K562 (cell line): ENCODE measurements at regions of chr15 and their contacts with region 1.

Region 1: GRCh38 chr15:66951531-66952320 is 113.7 kb upstream of the SMAD3 start:
- DNase-seq: no peak
- ATAC-seq: no peak
- H3K4me3 ChIP-seq: no peak overlapping the region
- H3K27ac ChIP-seq: no peak overlapping the region
- H3K4me1 ChIP-seq: 0 out of 5 replicates have a peak, but pooled peaks cover 0 to 5% of the 10 kb centered on the region in 2 experiments
- H3K27me3 ChIP-seq: 0 out of 5 replicates have a peak, but pooled peaks cover 0 to 6% of the 10 kb centered on the region in 2 experiments
- CTCF ChIP-seq: no peak
- EP300 ChIP-seq: no peak
- POLR2A ChIP-seq: no peak
- RAD21 ChIP-seq: no peak

Region 2: DNA sequence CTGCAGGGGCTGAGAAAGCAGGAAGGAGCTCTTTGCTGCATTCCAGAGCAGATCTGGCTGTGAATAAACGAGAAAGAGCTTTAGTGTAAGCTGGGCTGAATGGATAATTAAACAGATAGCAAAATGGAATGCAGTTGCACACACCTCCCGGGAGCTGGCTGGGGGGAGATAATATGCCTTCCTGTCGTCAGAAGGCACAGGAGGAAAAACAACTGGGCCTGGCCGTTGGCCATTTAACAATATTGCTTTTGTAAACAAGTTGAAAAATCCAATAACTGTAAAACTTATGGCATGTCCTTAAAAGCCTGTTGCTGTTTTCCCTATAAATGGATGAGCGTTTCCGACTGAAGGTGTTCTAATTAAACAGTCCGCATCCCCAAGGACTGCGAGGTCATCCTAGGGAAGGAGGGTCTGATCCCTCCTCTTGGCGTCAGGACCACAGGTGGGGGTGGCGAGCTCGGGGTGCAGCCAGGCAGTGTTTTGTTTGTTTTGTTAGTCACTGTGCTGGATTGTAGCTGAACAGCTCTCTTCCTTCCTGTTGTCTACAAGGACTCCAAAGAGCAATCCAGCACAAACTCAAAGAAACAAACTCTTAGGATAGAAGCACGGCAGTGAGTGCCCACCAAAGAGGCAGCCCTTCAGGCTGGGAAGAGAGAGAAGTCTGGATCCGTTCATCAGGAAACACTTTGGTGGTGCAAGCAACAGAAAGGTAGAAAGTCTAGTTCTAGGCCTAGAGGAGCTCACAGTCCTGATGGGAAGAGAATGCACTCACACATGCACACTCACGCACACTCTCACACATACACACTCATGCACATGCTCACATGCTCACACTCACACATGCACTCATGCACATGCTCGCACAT is 19.7 kb before region 1 on chr15:
- CTCF ChIA-PET with region 1: no interaction called
- POLR2A ChIA-PET with region 1: no interaction called
- in situ Hi-C with region 1: no loop called
- intact Hi-C with region 1: no loop called
- DNase-seq: peak in 2 of 4 experiments; percentile 57 to 59
- ATAC-seq: peak; percentile 81
- H3K4me3 ChIP-seq: no peak overlapping the region
- H3K27ac ChIP-seq: peak overlapping the region; percentile 69
- H3K4me1 ChIP-seq: peaks cover 30% of the 10 kb centered on the region in 2 experiments
- H3K27me3 ChIP-seq: no peaks in the 10 kb centered on the region
- CTCF ChIP-seq: no peak
- EP300 ChIP-seq: peak; percentile 65; the same call in 1 of the 2 replicates
- POLR2A ChIP-seq: no peak
- RAD21 ChIP-seq: no peak

Region 3: DNA sequence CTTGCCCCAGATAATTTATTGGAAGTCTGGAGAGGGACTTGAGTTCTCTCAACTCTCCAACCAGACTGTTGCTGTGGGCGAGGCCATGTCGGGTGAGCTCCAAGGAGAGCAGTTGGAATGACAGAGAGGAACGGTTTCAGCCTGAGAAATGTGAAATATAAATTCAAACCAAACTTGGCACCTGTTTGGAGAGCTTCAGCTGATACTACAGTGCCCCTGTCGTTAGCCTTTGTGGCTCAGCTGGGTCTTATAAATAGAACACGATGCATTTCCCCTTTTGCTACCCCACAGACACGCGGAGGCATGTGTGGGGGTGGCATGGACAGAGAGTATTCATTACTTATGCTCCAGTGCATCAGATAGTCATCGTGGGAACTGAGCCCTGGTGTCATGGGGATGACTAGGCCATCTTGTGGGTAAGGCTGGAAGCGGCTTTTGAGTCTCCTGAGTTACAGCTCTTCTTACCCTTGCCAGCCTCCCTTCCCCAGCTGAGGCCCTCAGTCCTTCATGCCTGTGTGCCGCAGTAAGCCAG is 129.2 kb after region 1 on chr15:
- CTCF ChIA-PET with region 1: no interaction called
- POLR2A ChIA-PET with region 1: no interaction called
- in situ Hi-C with region 1: no loop called
- intact Hi-C with region 1: loop called (anchors 5 kb)
- DNase-seq: peak in 3 of 4 experiments; percentile 46 to 78 (median 77)
- ATAC-seq: peak; percentile 54
- H3K4me3 ChIP-seq: no peak overlapping the region
- H3K27ac ChIP-seq: peak overlapping the region; percentile 69
- H3K4me1 ChIP-seq: peaks cover 14 to 69% of the 10 kb centered on the region in 2 experiments
- H3K27me3 ChIP-seq: no peaks in the 10 kb centered on the region
- CTCF ChIP-seq: peak; percentile 19 to 52 (median 37); a peak in 3 of 6 replicates
- EP300 ChIP-seq: peak; percentile 75
- POLR2A ChIP-seq: no peak
- RAD21 ChIP-seq: peak; percentile 64 to 76